ENCODE measurements at regions of chr7 and their contacts with region 1.

Region 1: DNA sequence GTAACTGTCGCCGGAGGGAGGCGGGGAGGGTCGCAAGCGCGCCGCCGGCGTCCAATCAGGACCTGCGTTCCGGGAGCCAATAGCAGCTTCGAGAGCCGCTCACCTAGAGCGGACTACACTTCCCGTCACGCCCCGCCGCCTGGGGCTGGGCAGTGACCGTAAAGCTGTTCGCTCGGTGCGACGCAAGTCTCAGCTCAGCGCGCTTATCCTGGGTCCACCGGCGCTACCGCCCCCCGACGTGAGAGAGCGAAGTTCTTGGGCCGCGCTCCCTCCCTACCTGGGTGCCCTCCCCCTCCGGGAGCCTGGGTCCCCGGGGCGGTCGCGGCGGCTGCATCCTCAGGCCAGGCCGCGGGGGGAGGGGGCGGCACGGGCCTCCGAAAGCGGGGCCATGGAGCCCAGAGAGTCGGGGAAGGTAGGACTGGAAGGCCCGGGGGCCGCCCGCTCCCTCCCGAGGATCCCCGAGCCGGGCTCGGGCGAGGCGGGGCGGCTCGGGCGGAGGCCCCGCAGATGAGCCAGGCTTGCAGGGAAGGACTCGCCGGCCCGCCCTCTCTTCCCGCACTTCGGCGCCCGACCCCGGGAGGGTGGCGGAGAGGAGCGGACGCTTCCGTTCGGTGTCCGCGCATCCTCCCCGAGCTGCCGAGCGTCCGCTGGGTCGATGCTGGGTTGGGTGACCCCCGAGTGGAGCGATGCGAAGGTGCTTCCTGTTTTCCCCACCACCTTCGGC is at the start of gene ZNF862:
- DNase-seq: peak; percentile 97
- H3K4me3 Mint-ChIP-seq: peak within 1 kb of the TSS; percentile 80
- H3K27ac Mint-ChIP-seq: peak within 1 kb of the TSS; percentile 65
- H3K4me1 Mint-ChIP-seq: peaks cover 28% of the 10 kb centered on the region
- H3K27me3 Mint-ChIP-seq: no peaks in the 10 kb centered on the region
- total RNA-seq, gene ZNF862: 18.1 to 21.4 TPM

Region 2: GRCh38 chr7:149460493-149461277 is 377.7 kb before region 1 on chr7 and contains the start of gene ZNF777:
- CTCF ChIA-PET with region 1: no interaction called
- POLR2A ChIA-PET with region 1: no interaction called
- intact Hi-C with region 1: no loop called
- DNase-seq: peak; percentile 88
- H3K4me3 Mint-ChIP-seq: peak within 1 kb of the TSS; percentile 82
- H3K27ac Mint-ChIP-seq: peak within 1 kb of the TSS; percentile 44
- H3K4me1 Mint-ChIP-seq: peaks cover 19% of the 10 kb centered on the region
- H3K27me3 Mint-ChIP-seq: peaks cover 2% of the 10 kb centered on the region
- total RNA-seq, gene ZNF777: 10.1 to 11.4 TPM

Region 3: DNA sequence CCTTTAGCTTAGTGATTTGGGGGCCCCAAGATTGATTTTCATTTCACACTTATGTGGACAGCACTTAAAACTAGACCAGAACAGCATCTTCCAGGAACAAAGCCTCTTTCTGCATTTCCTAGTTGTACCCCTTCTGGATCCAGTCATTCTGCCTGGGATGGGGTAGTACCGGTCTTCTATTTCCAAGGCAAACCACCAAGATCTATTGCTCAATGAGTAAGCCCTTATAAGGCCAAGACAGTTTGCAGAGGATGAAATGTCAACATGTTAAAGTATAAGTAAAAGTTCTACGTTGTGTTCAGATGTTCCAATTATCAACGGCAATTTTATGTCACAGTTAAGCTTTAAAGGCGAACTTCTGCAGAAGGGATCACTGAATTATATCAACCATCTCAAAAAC is 233.9 kb before region 1 on chr7:
- CTCF ChIA-PET with region 1: no interaction called
- POLR2A ChIA-PET with region 1: no interaction called
- intact Hi-C with region 1: no loop called
- DNase-seq: no peak
- H3K4me3 Mint-ChIP-seq: no peak overlapping the region
- H3K27ac Mint-ChIP-seq: no peak overlapping the region
- H3K4me1 Mint-ChIP-seq: peaks cover 21% of the 10 kb centered on the region
- H3K27me3 Mint-ChIP-seq: no peaks in the 10 kb centered on the region

Region 4: DNA sequence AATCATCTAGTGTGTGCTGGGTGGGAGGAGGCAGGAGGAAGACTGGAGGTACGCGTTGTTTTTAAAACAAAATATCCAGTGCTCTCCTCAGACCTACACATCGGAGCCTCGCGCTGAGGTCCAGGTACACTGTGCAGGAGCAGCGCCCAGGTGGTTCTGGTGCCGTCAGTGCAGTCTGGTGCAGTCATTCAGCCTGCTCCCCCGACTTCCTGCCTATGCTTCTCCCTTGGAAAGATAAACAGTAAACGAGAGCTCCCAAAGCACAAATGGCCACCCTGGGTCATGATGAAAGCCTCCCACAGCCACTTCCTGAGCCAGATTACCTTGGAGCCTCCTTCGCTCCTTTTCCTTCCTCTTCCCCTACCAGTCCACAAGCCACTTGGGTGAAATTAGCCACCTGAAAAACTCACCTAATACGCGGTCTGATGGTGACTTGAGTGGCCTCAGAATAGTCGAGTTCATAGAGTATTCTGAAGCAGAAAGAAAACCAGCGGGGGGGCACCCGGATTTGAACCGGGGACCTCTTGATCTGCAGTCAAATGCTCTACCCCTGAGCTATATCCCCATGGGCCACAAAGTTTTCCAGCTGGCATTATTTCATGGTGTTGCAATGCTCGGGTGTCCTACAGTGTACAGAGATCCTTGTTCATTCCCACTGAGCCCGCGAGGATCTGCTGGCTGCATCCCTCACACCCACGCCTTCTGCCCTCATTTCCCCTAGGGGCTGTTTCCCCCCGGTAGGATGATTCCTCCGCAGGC is 147.5 kb before region 1 on chr7:
- CTCF ChIA-PET with region 1: no interaction called
- POLR2A ChIA-PET with region 1: no interaction called
- intact Hi-C with region 1: no loop called
- DNase-seq: peak; percentile 27
- H3K4me3 Mint-ChIP-seq: no peak overlapping the region
- H3K27ac Mint-ChIP-seq: no peak overlapping the region
- H3K4me1 Mint-ChIP-seq: no peaks in the 10 kb centered on the region
- H3K27me3 Mint-ChIP-seq: peaks cover 41% of the 10 kb centered on the region

Region 5: GRCh38 chr7:149771721-149772240 is 66.6 kb before region 1 on chr7:
- CTCF ChIA-PET with region 1: no interaction called
- POLR2A ChIA-PET with region 1: interaction called, 3 read pairs
- intact Hi-C with region 1: loop called (anchors 5 kb)
- DNase-seq: peak; percentile 92
- H3K4me3 Mint-ChIP-seq: peak overlapping the region; percentile 69
- H3K27ac Mint-ChIP-seq: no peak overlapping the region
- H3K4me1 Mint-ChIP-seq: peaks cover 1% of the 10 kb centered on the region
- H3K27me3 Mint-ChIP-seq: peaks cover 2% of the 10 kb centered on the region

Region 6: DNA sequence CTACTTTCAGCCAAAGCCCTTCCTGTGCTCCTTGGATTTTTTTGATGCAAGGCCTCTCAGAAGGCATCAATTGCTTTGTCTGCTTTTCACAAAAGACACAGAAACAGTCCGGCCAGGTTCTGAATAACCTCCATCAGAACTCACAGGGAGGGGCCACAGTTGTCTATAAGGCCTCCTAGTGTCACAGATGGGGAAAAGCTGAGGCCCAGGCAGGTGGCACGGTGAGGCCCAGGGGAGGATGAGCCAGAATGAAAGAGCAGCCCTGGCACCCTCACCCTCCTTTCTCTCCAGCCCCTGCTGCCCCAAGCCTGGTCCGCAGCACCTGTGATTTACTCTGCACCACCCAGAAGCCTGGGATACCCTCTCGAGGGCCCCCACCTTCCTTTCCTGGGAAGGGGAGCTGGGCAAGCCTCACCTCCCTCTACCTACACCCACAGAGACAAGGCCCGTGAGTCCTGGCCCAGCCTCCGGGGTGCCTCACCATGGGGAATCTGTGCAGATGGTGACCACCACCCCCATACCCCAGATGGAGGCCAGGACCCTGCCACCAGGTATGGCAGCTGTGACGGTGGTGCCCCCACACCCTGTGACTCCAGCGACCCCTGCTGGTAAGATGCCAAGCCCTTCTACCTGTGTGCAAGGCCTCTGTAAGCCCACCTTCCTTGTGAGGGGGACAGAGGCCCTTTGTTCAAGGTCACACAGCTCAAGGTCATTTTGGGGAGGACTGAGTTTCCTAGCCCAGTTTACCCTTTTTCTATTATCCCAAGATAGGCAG is 38.8 kb before region 1 on chr7:
- CTCF ChIA-PET with region 1: no interaction called
- POLR2A ChIA-PET with region 1: no interaction called
- intact Hi-C with region 1: no loop called
- DNase-seq: peak; percentile 67
- H3K4me3 Mint-ChIP-seq: no peak overlapping the region
- H3K27ac Mint-ChIP-seq: no peak overlapping the region
- H3K4me1 Mint-ChIP-seq: no peaks in the 10 kb centered on the region
- H3K27me3 Mint-ChIP-seq: no peaks in the 10 kb centered on the region

Region 7: GRCh38 chr7:149866779-149867447 is 28.5 kb after region 1 on chr7:
- CTCF ChIA-PET with region 1: interaction called, 11 read pairs
- POLR2A ChIA-PET with region 1: interaction called, 11 read pairs
- intact Hi-C with region 1: no loop called
- DNase-seq: no peak
- H3K4me3 Mint-ChIP-seq: no peak overlapping the region
- H3K27ac Mint-ChIP-seq: peak overlapping the region; percentile 94
- H3K4me1 Mint-ChIP-seq: peaks cover 85% of the 10 kb centered on the region
- H3K27me3 Mint-ChIP-seq: no peaks in the 10 kb centered on the region

Region 8: GRCh38 chr7:149873074-149873969 is 34.9 kb after region 1 on chr7 and contains the start of gene ATP6V0E2:
- CTCF ChIA-PET with region 1: interaction called, 11 read pairs
- POLR2A ChIA-PET with region 1: interaction called, 11 read pairs
- intact Hi-C with region 1: loop called (anchors 1 kb)
- DNase-seq: peak; percentile 96
- H3K4me3 Mint-ChIP-seq: peak within 1 kb of the TSS; percentile 86
- H3K27ac Mint-ChIP-seq: peak within 1 kb of the TSS; percentile 86
- H3K4me1 Mint-ChIP-seq: peaks cover 69% of the 10 kb centered on the region
- H3K27me3 Mint-ChIP-seq: no peaks in the 10 kb centered on the region
- total RNA-seq, gene ATP6V0E2: 33.5 to 34.1 TPM